PC-9 (cell line): ENCODE measurements at regions of chr18 and their contacts with region 1.

Region 1: DNA sequence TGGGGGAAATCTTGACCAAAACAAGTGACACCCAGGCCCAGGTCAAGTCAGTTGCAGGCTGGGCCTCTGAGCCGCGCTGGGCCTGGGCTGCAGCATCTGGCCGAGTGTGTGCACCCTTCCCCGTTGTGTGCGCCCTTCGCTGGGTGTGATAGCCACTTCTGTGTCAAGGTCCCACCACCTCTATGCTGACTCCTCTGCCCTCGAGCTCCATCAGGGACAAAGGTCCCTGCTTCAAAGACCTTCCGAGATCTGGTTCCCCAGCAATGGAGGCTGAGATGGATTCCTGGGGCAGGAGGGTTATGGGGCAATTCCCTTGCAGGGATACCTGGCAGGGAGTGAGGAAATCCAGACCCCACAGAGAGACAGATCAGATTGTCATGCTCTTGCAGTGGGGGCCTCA is 93.6 kb downstream of the PIEZO2 start:
- DNase-seq: no peak
- H3K4me3 ChIP-seq: no peak overlapping the region
- H3K27ac ChIP-seq: no peak overlapping the region
- H3K4me1 ChIP-seq: no peaks in the 10 kb centered on the region
- H3K27me3 ChIP-seq: peaks cover 28% of the 10 kb centered on the region
- CTCF ChIP-seq: no peak

Region 2: GRCh38 chr18:11114664-11115063 is 58.9 kb after region 1 on chr18:
- CTCF ChIA-PET with region 1: interaction called, 11 read pairs
- POLR2A ChIA-PET with region 1: no interaction called
- intact Hi-C with region 1: no loop called
- DNase-seq: no peak
- H3K4me3 ChIP-seq: no peak overlapping the region
- H3K27ac ChIP-seq: no peak overlapping the region
- H3K4me1 ChIP-seq: no peaks in the 10 kb centered on the region
- H3K27me3 ChIP-seq: peaks cover 62% of the 10 kb centered on the region
- CTCF ChIP-seq: no peak